Caco-2 (cell line): ENCODE measurements at regions of chr18 and their contacts with region 1.

Region 1: GRCh38 chr18:37537868-37538525 is 27.6 kb downstream of the CELF4 start:
- DNase-seq: peak; percentile 48 to 71
- H3K4me3 ChIP-seq: no peak overlapping the region
- H3K4me3 Mint-ChIP-seq: no peak overlapping the region
- H3K27ac Mint-ChIP-seq: no peak overlapping the region
- H3K4me1 ChIP-seq: no peaks in the 10 kb centered on the region
- H3K4me1 Mint-ChIP-seq: no peaks in the 10 kb centered on the region
- H3K27me3 ChIP-seq: no peaks in the 10 kb centered on the region
- H3K27me3 Mint-ChIP-seq: peaks cover 19% of the 10 kb centered on the region
- CTCF ChIP-seq: peak; percentile 38 to 70

Region 2: DNA sequence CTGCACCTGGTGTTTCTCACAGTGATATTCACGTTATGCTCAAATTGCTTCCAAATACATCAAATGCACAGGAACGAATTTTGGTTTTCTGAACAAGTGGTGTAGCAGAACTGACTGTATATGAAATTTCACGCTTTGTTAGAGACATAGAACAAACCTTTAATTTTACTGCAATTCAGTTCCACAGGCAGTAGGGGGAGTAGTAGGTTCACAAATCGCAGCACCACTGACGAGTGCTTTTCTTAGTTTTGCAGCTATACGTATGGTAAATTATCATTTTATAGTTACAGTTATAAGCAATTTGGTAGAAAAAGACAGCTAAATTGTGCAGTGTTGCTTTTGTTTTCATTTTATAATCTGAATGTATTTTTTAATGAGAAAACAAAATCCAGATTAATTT is 595.7 kb before region 1 on chr18:
- CTCF ChIA-PET with region 1: interaction called, 3 read pairs
- POLR2A ChIA-PET with region 1: no interaction called
- intact Hi-C with region 1: loop called (anchors 10 kb)
- DNase-seq: peak in 1 of 2 experiments; percentile 17
- H3K4me3 ChIP-seq: no peak overlapping the region
- H3K4me3 Mint-ChIP-seq: no peak overlapping the region
- H3K27ac Mint-ChIP-seq: no peak overlapping the region
- H3K4me1 ChIP-seq: no peaks in the 10 kb centered on the region
- H3K4me1 Mint-ChIP-seq: no peaks in the 10 kb centered on the region
- H3K27me3 ChIP-seq: no peaks in the 10 kb centered on the region
- H3K27me3 Mint-ChIP-seq: no peaks in the 10 kb centered on the region
- CTCF ChIP-seq: no peak

Region 3: DNA sequence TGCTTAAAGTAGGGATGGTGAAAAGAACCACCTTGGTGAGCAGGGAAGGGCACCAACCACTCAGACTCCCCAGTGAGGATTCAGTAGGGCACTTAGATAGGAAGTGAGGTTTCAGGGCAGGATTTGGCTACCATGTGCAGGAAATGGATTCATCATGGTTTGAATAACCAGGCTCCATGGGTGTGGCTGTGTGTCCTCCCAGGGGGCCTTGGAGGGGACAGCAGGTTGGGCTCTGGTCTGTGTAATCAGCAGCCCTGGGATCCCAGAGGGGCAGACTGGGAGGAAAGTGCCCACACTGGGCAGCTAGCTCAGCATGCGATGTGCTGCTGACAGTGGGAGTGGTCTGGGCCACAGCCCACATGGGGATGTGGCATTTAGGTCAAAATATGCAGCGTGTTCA is 197.0 kb before region 1 on chr18:
- CTCF ChIA-PET with region 1: interaction called, 3 read pairs
- POLR2A ChIA-PET with region 1: no interaction called
- intact Hi-C with region 1: loop called (anchors 5 kb)
- DNase-seq: no peak
- H3K4me3 ChIP-seq: no peak overlapping the region
- H3K4me3 Mint-ChIP-seq: no peak overlapping the region
- H3K27ac Mint-ChIP-seq: no peak overlapping the region
- H3K4me1 ChIP-seq: no peaks in the 10 kb centered on the region
- H3K4me1 Mint-ChIP-seq: no peaks in the 10 kb centered on the region
- H3K27me3 ChIP-seq: no peaks in the 10 kb centered on the region
- H3K27me3 Mint-ChIP-seq: peaks cover 6% of the 10 kb centered on the region
- CTCF ChIP-seq: no peak

Region 4: DNA sequence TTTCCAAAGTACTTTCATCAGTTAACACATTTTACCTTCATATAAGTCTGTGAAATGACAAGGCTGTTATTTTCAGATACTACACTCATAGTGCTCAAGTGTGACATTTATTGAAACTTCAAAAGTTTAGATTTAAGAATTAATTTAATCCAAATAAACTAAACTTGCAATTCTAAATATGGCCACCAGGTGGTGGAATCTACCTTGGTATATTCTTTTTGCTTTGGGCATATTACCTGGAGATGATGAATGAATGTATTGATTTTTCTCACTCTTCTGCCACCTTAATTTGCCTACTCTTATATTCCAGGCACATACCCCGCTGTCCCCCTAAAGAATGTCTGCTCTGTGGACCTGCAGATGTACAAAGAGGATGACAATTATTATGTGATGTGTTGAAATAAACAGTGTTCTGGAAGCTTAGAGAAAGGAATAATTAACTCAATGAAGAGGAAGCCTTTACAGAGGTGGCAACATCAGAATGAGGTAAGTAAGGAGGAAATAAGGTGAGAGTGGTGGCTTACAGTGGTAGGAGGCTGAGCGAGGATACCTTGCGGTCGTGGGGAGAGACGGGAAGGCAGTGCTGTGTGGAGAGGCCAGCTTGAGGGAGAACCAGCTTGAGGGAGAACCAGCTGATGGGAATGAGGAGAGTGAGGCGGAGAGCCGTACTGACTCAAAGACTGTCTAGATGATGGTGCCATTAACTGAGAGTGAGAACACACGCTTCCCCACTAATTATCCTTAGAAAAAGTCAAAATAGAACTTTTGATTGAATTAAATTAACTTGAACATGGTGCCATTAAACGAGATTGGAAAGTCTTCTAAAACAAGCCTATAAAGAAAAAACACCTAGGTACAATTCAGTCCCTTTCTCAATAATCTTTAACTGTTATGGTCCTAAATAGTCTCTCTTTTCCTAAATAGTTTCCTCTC is 151.9 kb before region 1 on chr18:
- CTCF ChIA-PET with region 1: no interaction called
- POLR2A ChIA-PET with region 1: no interaction called
- intact Hi-C with region 1: loop called (anchors 5 kb)
- DNase-seq: no peak
- H3K4me3 ChIP-seq: no peak overlapping the region
- H3K4me3 Mint-ChIP-seq: no peak overlapping the region
- H3K27ac Mint-ChIP-seq: no peak overlapping the region
- H3K4me1 ChIP-seq: no peaks in the 10 kb centered on the region
- H3K4me1 Mint-ChIP-seq: no peaks in the 10 kb centered on the region
- H3K27me3 ChIP-seq: no peaks in the 10 kb centered on the region
- H3K27me3 Mint-ChIP-seq: peaks cover 6% of the 10 kb centered on the region
- CTCF ChIP-seq: peak; percentile 31 to 36

Region 5: GRCh38 chr18:37409877-37410276 is 128.1 kb before region 1 on chr18:
- CTCF ChIA-PET with region 1: no interaction called
- POLR2A ChIA-PET with region 1: no interaction called
- intact Hi-C with region 1: no loop called
- DNase-seq: peak in 1 of 2 experiments; percentile 33
- H3K4me3 ChIP-seq: no peak overlapping the region
- H3K4me3 Mint-ChIP-seq: no peak overlapping the region
- H3K27ac Mint-ChIP-seq: no peak overlapping the region
- H3K4me1 ChIP-seq: no peaks in the 10 kb centered on the region
- H3K4me1 Mint-ChIP-seq: no peaks in the 10 kb centered on the region
- H3K27me3 ChIP-seq: no peaks in the 10 kb centered on the region
- H3K27me3 Mint-ChIP-seq: no peaks in the 10 kb centered on the region
- CTCF ChIP-seq: no peak

Region 6: DNA sequence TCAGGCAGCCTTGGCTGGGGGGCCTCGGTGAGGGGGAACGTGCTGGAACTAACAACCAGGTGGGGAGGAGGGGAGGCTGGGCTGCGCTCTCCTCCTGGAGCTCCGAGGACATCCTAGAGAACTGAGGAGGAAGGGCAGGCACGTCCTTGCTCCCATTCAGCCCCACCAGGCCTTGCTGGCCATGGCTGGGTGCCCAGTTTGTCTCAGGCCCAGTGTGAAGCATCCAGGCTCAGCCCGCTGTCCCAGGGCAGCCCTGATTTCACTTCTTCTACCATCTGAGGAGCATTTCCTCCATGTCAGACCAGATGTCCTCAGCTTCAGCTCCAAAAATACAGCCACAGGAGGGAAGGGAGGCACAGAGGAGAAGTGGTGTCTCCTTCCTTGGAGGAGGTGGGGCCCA is 97.8 kb before region 1 on chr18:
- CTCF ChIA-PET with region 1: no interaction called
- POLR2A ChIA-PET with region 1: no interaction called
- intact Hi-C with region 1: loop called (anchors 1 kb)
- DNase-seq: no peak
- H3K4me3 ChIP-seq: no peak overlapping the region
- H3K4me3 Mint-ChIP-seq: no peak overlapping the region
- H3K27ac Mint-ChIP-seq: no peak overlapping the region
- H3K4me1 ChIP-seq: no peaks in the 10 kb centered on the region
- H3K4me1 Mint-ChIP-seq: no peaks in the 10 kb centered on the region
- H3K27me3 ChIP-seq: no peaks in the 10 kb centered on the region; the same call in 1 of the 2 replicates
- H3K27me3 Mint-ChIP-seq: peaks cover 12% of the 10 kb centered on the region
- CTCF ChIP-seq: no peak